ENCODE measurements at regions of chr7 and their contacts with region 1.

Region 1: GRCh38 chr7:141575164-141575563 is 24.0 kb downstream of the AGK start:
- DNase-seq: no peak
- H3K4me3 ChIP-seq: no peak overlapping the region
- H3K27ac ChIP-seq: no peak overlapping the region
- H3K4me1 ChIP-seq: no peaks in the 10 kb centered on the region
- H3K27me3 ChIP-seq: no peaks in the 10 kb centered on the region
- CTCF ChIP-seq: no peak
- POLR2A ChIP-seq: no peak

Region 2: GRCh38 chr7:141001122-141001521 is 574.0 kb before region 1 on chr7:
- intact Hi-C with region 1: no loop called
- DNase-seq: no peak
- H3K4me3 ChIP-seq: no peak overlapping the region
- H3K27ac ChIP-seq: no peak overlapping the region
- H3K4me1 ChIP-seq: no peaks in the 10 kb centered on the region
- H3K27me3 ChIP-seq: no peaks in the 10 kb centered on the region
- CTCF ChIP-seq: no peak
- POLR2A ChIP-seq: no peak

Region 3: GRCh38 chr7:142365410-142365842 is 790.3 kb after region 1 on chr7:
- intact Hi-C with region 1: loop called (anchors 5 kb)
- DNase-seq: no peak
- H3K4me3 ChIP-seq: no peak overlapping the region
- H3K27ac ChIP-seq: no peak overlapping the region
- H3K4me1 ChIP-seq: no peaks in the 10 kb centered on the region
- H3K27me3 ChIP-seq: no peaks in the 10 kb centered on the region
- CTCF ChIP-seq: no peak
- POLR2A ChIP-seq: no peak

Measured in breast epithelium (tissue), 4 donors.